ENCODE measurements at regions of chr16 and their contacts with region 1.

Region 1: DNA sequence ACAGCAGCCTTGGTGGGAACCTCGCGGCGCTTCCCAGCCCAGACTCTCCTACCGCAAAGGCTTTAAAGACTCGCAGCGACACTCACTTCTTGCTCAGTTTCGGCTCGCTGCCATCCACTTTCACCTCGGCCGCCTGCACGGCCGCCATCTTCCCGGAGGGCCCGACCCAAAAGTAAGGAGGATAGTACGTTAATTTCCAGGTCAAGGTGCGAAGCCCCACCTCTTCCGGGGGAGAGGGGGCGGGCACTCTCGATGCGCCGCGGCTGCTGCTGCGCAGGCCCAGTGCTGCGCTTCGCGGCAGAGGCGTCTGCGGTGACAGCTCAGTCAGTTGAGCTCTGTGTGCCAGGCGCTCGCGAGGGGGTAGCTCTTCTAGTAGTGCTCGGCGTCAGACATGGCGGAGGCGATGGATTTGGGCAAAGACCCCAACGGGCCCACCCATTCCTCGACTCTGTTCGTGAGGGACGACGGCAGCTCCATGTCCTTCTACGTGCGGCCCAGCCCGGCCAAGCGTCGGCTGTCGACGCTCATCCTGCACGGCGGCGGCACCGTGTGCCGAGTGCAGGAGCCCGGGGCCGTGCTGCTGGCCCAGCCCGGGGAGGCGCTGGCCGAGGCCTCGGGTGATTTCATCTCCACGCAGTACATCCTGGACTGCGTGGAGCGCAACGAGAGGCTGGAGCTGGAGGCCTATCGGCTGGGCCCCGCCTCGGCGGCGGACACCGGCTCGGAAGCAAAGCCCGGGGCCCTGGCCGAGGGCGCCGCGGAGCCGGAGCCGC is at the starts of genes KARS1 and TERF2IP:
- DNase-seq: peak; percentile 96
- H3K4me3 Mint-ChIP-seq: peak within 1 kb of the TSS; percentile 96
- H3K27ac Mint-ChIP-seq: peak within 1 kb of the TSS; percentile 97
- H3K4me1 Mint-ChIP-seq: peaks cover 58% of the 10 kb centered on the region
- H3K27me3 Mint-ChIP-seq: no peaks in the 10 kb centered on the region
- total RNA-seq, gene KARS1: 256 and 271 TPM in 2 replicates
- total RNA-seq, gene TERF2IP: 94.3 and 98.5 TPM in 2 replicates

Region 2: DNA sequence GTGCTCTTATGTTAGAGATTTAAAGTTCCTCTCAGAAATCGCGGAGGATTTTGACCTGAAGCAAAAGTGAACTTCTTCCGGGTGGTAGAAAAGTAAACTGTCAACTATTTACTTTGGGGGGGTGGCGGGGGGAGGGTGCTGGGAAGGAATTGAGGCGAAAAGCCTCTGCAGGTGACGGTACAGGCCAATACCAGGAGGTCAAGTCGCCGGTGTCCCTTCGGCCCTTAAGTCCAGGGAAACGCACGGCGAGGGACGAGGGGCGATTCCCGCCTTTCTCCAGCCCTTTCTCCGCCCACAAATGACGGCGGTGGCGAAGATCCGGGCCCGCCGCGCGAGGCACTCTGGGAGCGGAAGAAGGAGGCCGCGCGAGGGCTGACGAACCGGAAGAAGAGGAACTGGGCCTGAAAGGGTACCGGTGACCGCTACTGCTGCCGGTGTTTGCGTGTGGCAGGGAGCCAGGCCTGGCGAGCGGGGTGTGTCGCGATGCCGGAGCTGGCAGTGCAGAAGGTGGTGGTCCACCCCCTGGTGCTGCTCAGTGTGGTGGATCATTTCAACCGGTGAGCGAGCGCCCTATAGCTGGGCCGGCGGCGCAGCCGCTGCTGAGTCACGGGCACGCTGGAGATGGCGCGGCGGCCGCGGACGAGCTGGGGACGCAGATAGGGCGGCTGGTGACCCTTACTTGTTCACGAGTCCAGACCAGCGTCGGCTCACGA is 1351.1 kb before region 1 on chr16 and contains the start of gene PSMD7:
- intact Hi-C with region 1: loop called (anchors 5 kb)
- DNase-seq: peak; percentile 88
- H3K4me3 Mint-ChIP-seq: peak within 1 kb of the TSS; percentile 90
- H3K27ac Mint-ChIP-seq: peak within 1 kb of the TSS; percentile 93
- H3K4me1 Mint-ChIP-seq: peaks cover 27% of the 10 kb centered on the region
- H3K27me3 Mint-ChIP-seq: no peaks in the 10 kb centered on the region
- total RNA-seq, gene PSMD7: 168 and 175 TPM in 2 replicates

Region 3: DNA sequence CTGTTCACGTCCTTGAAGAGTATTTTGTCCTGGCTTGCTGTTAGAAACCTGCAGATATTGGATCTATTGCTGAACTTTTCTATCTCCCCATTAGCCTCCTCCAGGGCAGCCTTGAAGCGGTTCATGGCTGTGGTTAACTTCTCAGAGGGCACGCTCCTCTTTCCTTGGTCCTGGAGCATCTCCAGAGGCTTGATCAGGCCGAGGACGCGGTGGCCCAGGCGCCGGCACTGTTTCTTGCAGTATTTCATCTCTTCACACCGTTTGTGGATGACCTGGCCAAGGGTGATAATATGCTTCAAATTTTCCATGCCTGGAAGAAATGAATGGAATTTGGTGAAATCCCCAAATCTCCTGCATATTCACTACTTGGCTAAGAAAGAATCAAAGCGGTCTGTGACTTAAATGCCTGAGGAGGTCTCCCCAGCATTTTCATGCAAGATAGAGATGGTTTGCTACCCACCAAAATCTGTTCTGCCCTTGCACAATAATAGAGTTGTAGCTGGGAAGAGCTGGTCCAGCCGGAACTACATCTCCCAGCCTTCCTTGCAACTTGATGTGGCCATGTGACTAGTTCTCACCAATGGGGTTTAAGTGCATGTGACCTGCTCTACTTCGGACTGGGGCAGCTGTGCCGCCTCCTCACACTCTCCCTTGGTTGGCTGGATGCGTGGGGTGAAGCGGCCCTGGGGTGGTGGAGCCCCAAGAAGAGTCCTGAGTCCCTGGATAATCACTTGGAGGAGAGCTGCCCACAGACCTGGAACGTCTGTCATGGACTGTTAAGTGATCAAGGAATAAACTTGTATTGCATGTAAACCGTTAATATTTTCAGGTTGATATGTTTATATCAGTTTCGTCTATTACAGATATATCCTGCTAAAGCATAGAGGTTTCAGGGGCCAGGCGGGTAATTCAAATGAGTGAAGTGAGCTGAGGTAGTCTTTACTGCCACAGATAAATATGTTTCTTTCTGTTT is 951.9 kb before region 1 on chr16:
- intact Hi-C with region 1: loop called (anchors 2 kb)
- DNase-seq: peak; percentile 66
- H3K4me3 Mint-ChIP-seq: peak overlapping the region; percentile 84
- H3K27ac Mint-ChIP-seq: peak overlapping the region; percentile 70
- H3K4me1 Mint-ChIP-seq: peaks cover 50% of the 10 kb centered on the region
- H3K27me3 Mint-ChIP-seq: no peaks in the 10 kb centered on the region

Region 4: GRCh38 chr16:75432828-75433731 is 214.6 kb before region 1 on chr16 and contains the start of gene CFDP1:
- intact Hi-C with region 1: loop called (anchors 1 kb)
- DNase-seq: peak; percentile 93
- H3K4me3 Mint-ChIP-seq: peak within 1 kb of the TSS; percentile 85
- H3K27ac Mint-ChIP-seq: peak within 1 kb of the TSS; percentile 99
- H3K4me1 Mint-ChIP-seq: peaks cover 21% of the 10 kb centered on the region
- H3K27me3 Mint-ChIP-seq: no peaks in the 10 kb centered on the region
- total RNA-seq, gene CFDP1: 35.4 TPM in 2 replicates

Region 5: GRCh38 chr16:75555707-75556430 is 91.8 kb before region 1 on chr16 and contains the start of gene TMEM231:
- intact Hi-C with region 1: loop called (anchors 1 kb)
- DNase-seq: peak; percentile 95
- H3K4me3 Mint-ChIP-seq: peak within 1 kb of the TSS; percentile 92
- H3K27ac Mint-ChIP-seq: peak within 1 kb of the TSS; percentile 89
- H3K4me1 Mint-ChIP-seq: peaks cover 11% of the 10 kb centered on the region
- H3K27me3 Mint-ChIP-seq: peaks cover 7% of the 10 kb centered on the region
- total RNA-seq, gene TMEM231: 4.5 and 4.7 TPM in 2 replicates

Region 6: DNA sequence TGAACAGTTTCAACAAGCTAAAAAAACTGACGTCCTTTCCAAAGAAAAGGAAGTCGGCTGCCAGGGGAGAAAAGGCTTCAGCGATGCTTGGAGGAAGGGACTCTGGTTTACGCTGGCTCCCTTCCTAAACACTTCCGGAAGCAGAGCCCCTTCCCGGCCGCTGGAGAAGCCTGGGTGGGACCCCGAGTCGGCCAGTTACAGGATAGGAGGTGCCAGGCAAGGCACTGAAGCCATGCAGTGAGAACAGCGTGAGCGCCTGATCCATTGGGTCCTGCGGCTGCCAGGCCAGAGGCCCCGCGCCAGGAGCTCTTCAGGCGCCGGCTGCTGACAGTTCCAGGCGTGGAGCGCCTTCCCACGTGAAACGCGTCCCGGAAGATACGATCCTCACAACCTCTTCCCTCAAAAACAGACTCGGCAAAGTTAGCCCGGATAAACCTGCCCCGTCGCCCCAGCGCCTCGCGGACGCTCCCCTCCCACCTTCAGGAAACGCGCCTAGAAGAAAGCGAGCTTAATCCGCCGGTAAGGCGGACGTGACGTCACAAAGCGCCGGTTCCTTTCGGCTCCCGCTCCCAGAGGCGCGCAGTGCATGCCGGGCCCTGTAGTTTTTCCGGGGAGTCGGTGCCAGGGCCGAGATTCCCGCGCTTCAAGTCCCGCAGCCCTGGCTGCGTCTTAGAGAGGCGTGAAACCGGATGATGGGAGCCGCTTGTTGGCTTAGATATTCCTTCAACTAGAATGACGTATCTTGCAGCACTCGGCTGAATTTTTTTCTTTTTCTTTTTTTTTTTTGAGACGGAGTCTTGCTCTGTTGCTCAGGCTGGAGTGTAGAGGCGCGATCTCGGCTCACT is 24.7 kb before region 1 on chr16 and contains the start of gene ADAT1:
- intact Hi-C with region 1: loop called (anchors 1 kb)
- DNase-seq: peak; percentile 96
- H3K4me3 Mint-ChIP-seq: peak within 1 kb of the TSS; percentile 90
- H3K27ac Mint-ChIP-seq: peak within 1 kb of the TSS; percentile 98
- H3K4me1 Mint-ChIP-seq: peaks cover 54% of the 10 kb centered on the region
- H3K27me3 Mint-ChIP-seq: no peaks in the 10 kb centered on the region
- total RNA-seq, gene ADAT1: 59.0 and 60.9 TPM in 2 replicates

Region 7: DNA sequence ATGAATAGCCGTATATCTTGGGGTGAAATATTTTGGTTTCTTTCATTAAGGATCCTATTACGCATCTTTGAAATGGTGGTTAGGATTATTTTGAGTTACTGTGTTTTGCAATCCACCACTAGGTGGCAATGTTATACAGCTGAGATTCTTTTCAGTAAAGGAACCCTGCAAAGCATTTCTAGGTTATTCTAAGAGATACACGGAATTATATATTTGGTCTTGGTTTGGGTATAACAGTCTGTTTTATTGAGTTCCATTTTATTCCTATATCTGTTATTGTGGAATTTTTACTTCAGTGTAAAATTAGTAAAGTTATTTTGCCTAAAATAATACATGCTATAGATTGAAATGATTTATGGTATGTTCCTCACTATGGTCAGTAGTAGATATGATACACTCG is 141.6 kb after region 1 on chr16:
- intact Hi-C with region 1: no loop called
- DNase-seq: no peak
- H3K4me3 Mint-ChIP-seq: no peak overlapping the region
- H3K27ac Mint-ChIP-seq: no peak overlapping the region
- H3K4me1 Mint-ChIP-seq: no peaks in the 10 kb centered on the region
- H3K27me3 Mint-ChIP-seq: peaks cover 2% of the 10 kb centered on the region

Region 8: DNA sequence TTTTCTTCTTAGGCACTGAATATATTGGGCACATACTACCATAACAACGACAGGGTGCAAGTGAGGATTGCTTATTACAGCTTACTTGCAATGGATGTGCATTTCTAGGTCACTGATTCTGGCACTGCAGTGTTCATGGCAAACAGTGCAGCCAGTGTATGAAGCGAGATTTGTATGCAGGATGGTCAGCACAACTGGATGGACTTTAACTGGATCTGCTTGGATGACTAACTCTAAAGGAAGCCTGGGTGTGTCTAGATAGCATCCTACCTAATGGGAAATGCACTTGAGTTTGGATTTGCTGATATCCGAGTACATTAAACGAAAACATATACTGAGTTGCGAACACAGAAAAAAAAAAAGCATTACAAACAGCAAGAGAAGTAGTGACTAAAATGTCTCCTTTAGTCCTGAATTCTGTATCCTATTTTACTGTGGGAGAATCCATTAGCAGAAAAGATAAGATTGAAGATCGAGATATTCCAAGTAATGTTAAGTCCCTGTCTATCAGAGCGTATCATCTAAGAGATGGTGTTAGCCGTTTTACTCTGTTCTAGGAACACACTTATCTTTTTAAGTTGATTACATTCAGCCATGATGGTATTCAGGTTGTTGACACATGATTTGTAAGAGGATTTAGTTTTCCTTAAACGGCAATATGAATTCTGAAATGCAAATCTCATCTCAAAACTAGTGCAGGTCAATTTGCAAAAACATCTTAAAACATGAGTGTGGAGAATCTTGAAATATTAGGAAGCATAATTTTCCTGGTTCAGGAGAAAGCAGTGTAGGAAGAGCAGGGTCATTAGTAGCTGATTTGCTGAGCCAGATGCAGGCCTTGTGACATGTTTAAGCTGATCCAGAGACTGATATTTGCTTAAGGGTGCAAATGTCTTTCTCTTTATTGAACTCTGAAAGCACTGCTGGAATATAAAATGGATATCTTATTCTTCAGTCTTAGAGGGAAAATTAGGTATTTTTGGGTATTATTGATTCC is 221.3 kb after region 1 on chr16:
- intact Hi-C with region 1: no loop called
- DNase-seq: no peak
- H3K4me3 Mint-ChIP-seq: no peak overlapping the region
- H3K27ac Mint-ChIP-seq: no peak overlapping the region
- H3K4me1 Mint-ChIP-seq: no peaks in the 10 kb centered on the region
- H3K27me3 Mint-ChIP-seq: peaks cover 2% of the 10 kb centered on the region

Region 9: DNA sequence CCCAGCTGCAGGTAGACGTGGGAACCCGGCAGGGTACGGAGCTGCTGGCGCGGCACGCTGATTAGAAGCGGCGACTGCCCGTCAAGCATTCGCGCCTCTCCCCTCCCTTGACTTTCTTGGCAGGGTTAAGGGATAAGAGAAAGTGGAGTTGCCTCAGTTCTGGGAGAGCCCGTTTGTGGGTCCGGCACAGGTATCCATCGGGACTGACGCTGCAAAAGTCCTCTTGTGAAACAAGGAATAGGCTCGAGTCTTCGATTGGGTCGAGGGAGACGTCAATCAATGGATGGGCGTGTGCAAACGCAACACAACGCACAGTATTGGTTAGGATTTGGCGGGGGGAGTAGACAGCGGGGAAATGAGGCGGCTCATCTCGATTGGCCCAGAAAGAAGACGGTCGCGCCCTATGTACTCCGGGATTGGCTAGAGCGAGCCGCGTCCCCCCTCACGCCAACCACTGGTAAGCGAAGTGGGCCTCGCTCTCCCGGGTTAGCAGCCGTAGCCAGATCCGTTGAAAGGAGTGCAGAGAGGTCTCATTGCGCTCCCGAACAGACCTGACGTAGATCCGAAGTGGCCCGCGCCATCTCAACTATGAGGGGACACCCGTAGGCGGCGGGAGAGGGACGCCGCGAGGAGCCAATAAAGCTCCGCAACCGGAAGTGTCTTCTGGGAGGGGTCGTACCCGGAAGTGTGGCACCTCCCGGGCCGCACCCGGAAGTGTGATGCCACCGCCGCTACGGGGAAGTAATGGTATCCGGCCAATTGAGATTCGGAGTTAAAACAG is 1543.0 kb after region 1 on chr16 and contains the start of gene MON1B:
- intact Hi-C with region 1: loop called (anchors 2 kb)
- DNase-seq: peak; percentile 93
- H3K4me3 Mint-ChIP-seq: peak within 1 kb of the TSS; percentile 97
- H3K27ac Mint-ChIP-seq: peak within 1 kb of the TSS; percentile 100
- H3K4me1 Mint-ChIP-seq: peaks cover 39% of the 10 kb centered on the region
- H3K27me3 Mint-ChIP-seq: peaks cover 4% of the 10 kb centered on the region
- total RNA-seq, gene MON1B: 66.2 and 70.1 TPM in 2 replicates

Measured in activated T-helper 1 cell treated with anti-CD3 and anti-CD28 coated beads, Interleukin-12 subunit alpha, Interleukin-12 subunit beta, Interleukin-2, Interleukin-4 antibody, amounts not matched to agents 30 ng/mL and 10 ng/mL and 1 ng/mL, durations not matched to agents 14 hours and 24 hours and 36 hours (primary cell).